Caco-2 (cell line): ENCODE measurements at regions of chr4 and their contacts with region 1.

Region 1: GRCh38 chr4:174365018-174365587 is 81.4 kb downstream of the CEP44 start:
- DNase-seq: peak in 1 of 2 experiments; percentile 66
- H3K4me3 ChIP-seq: no peak overlapping the region
- H3K4me3 Mint-ChIP-seq: no peak overlapping the region
- H3K27ac Mint-ChIP-seq: no peak overlapping the region
- H3K4me1 ChIP-seq: peaks cover 25% of the 10 kb centered on the region
- H3K4me1 Mint-ChIP-seq: no peaks in the 10 kb centered on the region
- H3K27me3 ChIP-seq: no peaks in the 10 kb centered on the region
- H3K27me3 Mint-ChIP-seq: no peaks in the 10 kb centered on the region
- CTCF ChIP-seq: peak; percentile 34 to 56

Region 2: GRCh38 chr4:173943547-173943946 is 421.6 kb before region 1 on chr4:
- CTCF ChIA-PET with region 1: no interaction called
- POLR2A ChIA-PET with region 1: no interaction called
- intact Hi-C with region 1: no loop called
- DNase-seq: no peak
- H3K4me3 ChIP-seq: no peak overlapping the region
- H3K4me3 Mint-ChIP-seq: no peak overlapping the region
- H3K27ac Mint-ChIP-seq: no peak overlapping the region
- H3K4me1 ChIP-seq: no peaks in the 10 kb centered on the region
- H3K4me1 Mint-ChIP-seq: no peaks in the 10 kb centered on the region
- H3K27me3 ChIP-seq: no peaks in the 10 kb centered on the region; the same call in 1 of the 2 replicates
- H3K27me3 Mint-ChIP-seq: no peaks in the 10 kb centered on the region
- CTCF ChIP-seq: no peak

Region 3: DNA sequence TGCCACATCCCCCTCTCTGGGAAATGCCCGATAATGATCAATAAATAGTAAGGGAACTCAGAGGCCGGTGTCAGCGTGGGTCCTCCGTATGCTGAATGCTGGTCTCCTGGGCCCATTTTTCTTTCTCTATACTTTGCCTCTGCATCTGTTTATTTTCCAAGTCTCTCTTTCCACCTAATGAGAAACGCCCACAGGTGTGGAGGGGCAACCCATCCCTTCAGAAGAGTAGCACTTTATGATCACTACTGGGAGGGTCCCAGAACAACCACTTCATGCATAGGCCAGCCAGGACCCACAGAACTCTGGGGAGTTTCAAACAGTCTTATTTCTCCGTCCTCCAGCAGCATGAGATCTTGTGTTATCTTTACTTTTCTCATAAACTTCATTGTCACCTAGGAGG is 18.7 kb after region 1 on chr4:
- CTCF ChIA-PET with region 1: no interaction called
- POLR2A ChIA-PET with region 1: no interaction called
- intact Hi-C with region 1: loop called (anchors 1 kb)
- DNase-seq: peak; percentile 59 to 60
- H3K4me3 ChIP-seq: no peak overlapping the region
- H3K4me3 Mint-ChIP-seq: peak overlapping the region; percentile 68
- H3K27ac Mint-ChIP-seq: peak overlapping the region; percentile 94
- H3K4me1 ChIP-seq: peaks cover 77% of the 10 kb centered on the region
- H3K4me1 Mint-ChIP-seq: peaks cover 28% of the 10 kb centered on the region
- H3K27me3 ChIP-seq: no peaks in the 10 kb centered on the region
- H3K27me3 Mint-ChIP-seq: no peaks in the 10 kb centered on the region
- CTCF ChIP-seq: no peak

Region 4: DNA sequence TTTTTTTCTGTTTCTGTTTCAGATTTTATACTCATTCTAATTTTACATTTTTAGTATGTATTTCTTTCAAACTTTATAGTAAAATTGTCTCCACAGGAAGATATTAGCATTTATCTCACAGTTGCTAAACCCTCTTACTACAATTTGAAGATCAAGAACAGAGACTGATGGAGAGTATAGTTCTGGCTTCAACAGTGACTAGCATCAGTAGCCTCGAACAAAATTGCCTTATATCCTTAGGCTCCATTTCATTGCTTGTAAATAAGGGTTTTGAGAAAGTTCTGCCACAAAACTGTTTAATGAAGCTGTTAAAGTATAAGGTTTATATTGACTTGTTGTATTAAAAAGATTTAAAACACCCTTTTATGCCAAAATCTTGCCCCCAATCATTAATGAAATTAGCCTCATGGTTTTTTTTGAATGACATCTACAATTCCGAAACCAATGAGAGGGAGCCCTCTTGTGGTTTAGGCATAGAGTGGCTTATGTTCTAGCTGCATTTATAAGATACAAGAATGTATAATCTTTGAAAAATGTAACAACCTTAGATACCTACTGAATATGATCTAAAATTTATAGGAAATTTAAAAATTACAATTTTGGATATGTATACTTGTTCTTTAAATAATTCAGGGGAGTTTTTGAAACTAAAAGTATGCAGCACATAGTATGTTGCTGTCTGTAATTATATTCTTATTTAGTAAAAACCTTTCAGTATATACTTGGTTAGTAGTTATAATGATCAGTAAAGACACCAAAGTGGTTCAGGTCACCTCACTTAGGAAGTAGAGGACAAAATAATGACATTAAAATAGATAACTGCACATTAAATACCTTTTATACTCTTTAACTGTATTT is 267.0 kb after region 1 on chr4:
- CTCF ChIA-PET with region 1: interaction called, 9 read pairs
- POLR2A ChIA-PET with region 1: no interaction called
- intact Hi-C with region 1: loop called (anchors 1 kb)
- DNase-seq: peak in 1 of 2 experiments; percentile 44
- H3K4me3 ChIP-seq: no peak overlapping the region
- H3K4me3 Mint-ChIP-seq: no peak overlapping the region
- H3K27ac Mint-ChIP-seq: no peak overlapping the region
- H3K4me1 ChIP-seq: peaks cover 6% of the 10 kb centered on the region; the same call in 1 of the 2 replicates
- H3K4me1 Mint-ChIP-seq: peaks cover 6% of the 10 kb centered on the region
- H3K27me3 ChIP-seq: no peaks in the 10 kb centered on the region
- H3K27me3 Mint-ChIP-seq: no peaks in the 10 kb centered on the region
- CTCF ChIP-seq: peak; percentile 69 to 85

Region 5: GRCh38 chr4:174714393-174715211 is 349.5 kb after region 1 on chr4:
- CTCF ChIA-PET with region 1: no interaction called
- POLR2A ChIA-PET with region 1: no interaction called
- intact Hi-C with region 1: loop called (anchors 1 kb)
- DNase-seq: peak; percentile 50 to 65
- H3K4me3 ChIP-seq: no peak overlapping the region
- H3K4me3 Mint-ChIP-seq: no peak overlapping the region
- H3K27ac Mint-ChIP-seq: no peak overlapping the region
- H3K4me1 ChIP-seq: 0 out of 2 replicates have a peak, but pooled peaks cover 4% of the 10 kb centered on the region
- H3K4me1 Mint-ChIP-seq: peaks cover 8% of the 10 kb centered on the region
- H3K27me3 ChIP-seq: no peaks in the 10 kb centered on the region; the same call in 1 of the 2 replicates
- H3K27me3 Mint-ChIP-seq: peaks cover 5% of the 10 kb centered on the region
- CTCF ChIP-seq: peak; percentile 66 to 85